ENCODE measurements at regions of chr12 and their contacts with region 1.

Region 1: DNA sequence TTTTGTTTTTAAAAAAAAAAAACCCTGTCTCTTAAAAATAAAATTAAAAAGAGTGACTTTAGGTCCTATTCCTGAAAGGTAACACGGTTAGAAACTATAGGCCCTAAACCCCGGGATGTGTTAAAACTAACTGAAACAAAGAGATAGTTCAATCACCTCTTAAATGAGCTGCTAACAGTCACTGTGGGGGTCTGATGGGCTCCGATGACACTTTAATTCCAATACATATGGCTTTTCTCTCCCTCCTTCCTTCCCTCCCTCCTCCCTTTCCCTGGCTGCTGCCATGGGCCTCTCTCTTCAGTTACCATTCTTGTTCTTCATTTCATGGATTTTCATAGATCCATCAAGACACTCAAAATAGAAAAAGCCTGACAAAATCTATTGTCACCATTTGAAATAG is 76.6 kb downstream of the RNF34 start:
- DNase-seq: no peak
- H3K4me3 ChIP-seq: no peak overlapping the region
- H3K27ac ChIP-seq: no peak overlapping the region
- H3K4me1 ChIP-seq: no peaks in the 10 kb centered on the region
- H3K27me3 ChIP-seq: no peaks in the 10 kb centered on the region

Region 2: GRCh38 chr12:121494093-121494787 is 17.8 kb after region 1 on chr12:
- CTCF ChIA-PET with region 1: interaction called, 44 read pairs
- POLR2A ChIA-PET with region 1: interaction called, 3 read pairs
- DNase-seq: peak; percentile 50 to 74 (median 59)
- H3K4me3 ChIP-seq: no peak overlapping the region
- H3K27ac ChIP-seq: no peak overlapping the region
- H3K4me1 ChIP-seq: peaks cover 6 to 31% (median 28%) of the 10 kb centered on the region in 4 experiments
- H3K27me3 ChIP-seq: no peaks in the 10 kb centered on the region

Region 3: DNA sequence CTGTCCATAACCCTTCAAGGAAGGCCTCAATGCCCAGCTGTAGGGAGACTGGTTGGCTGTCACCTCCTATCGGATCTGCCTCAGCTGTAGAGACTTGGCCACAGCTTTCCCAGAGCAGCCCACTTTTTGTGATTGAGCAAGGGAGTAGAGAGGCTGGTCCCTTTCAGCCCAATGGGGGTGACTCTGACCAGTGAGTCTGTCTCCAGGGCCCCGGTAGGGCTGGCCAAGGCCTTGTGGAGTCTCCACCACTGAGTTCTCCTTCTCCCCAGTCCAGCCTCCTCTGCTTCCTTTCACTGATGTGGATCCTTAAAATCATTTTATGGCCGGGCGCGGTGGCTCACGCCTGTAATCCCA is 396.7 kb after region 1 on chr12:
- CTCF ChIA-PET with region 1: no interaction called
- POLR2A ChIA-PET with region 1: no interaction called
- DNase-seq: no peak
- H3K4me3 ChIP-seq: no peak overlapping the region
- H3K27ac ChIP-seq: no peak overlapping the region
- H3K4me1 ChIP-seq: peaks cover 0 to 14% (median 0%) of the 10 kb centered on the region in 4 experiments
- H3K27me3 ChIP-seq: no peaks in the 10 kb centered on the region

Measured in common myeloid progenitor, CD34-positive (primary cell).